SK-N-SH (cell line): ENCODE measurements at regions of chr2 and their contacts with region 1.

Region 1: GRCh38 chr2:238362626-238363025 is 42.3 kb downstream of the TRAF3IP1 start:
- DNase-seq: no peak
- H3K4me3 ChIP-seq: no peak overlapping the region
- H3K27ac ChIP-seq: no peak overlapping the region
- H3K4me1 ChIP-seq: peaks cover 0 to 4% of the 10 kb centered on the region in 2 experiments; a peak in 1 of 4 replicates
- H3K27me3 ChIP-seq: no peaks in the 10 kb centered on the region
- CTCF ChIP-seq: no peak
- EP300 ChIP-seq: no peak
- RAD21 ChIP-seq: no peak

Region 2: GRCh38 chr2:238331916-238332315 is 30.7 kb before region 1 on chr2:
- CTCF ChIA-PET with region 1: interaction called, 12 read pairs
- POLR2A ChIA-PET with region 1: no interaction called
- DNase-seq: peak; percentile 59
- H3K4me3 ChIP-seq: no peak overlapping the region
- H3K27ac ChIP-seq: no peak overlapping the region
- H3K4me1 ChIP-seq: peaks cover 0 to 10% of the 10 kb centered on the region in 2 experiments; a peak in 1 of 4 replicates
- H3K27me3 ChIP-seq: no peaks in the 10 kb centered on the region
- CTCF ChIP-seq: no peak
- EP300 ChIP-seq: no peak
- RAD21 ChIP-seq: no peak

Region 3: DNA sequence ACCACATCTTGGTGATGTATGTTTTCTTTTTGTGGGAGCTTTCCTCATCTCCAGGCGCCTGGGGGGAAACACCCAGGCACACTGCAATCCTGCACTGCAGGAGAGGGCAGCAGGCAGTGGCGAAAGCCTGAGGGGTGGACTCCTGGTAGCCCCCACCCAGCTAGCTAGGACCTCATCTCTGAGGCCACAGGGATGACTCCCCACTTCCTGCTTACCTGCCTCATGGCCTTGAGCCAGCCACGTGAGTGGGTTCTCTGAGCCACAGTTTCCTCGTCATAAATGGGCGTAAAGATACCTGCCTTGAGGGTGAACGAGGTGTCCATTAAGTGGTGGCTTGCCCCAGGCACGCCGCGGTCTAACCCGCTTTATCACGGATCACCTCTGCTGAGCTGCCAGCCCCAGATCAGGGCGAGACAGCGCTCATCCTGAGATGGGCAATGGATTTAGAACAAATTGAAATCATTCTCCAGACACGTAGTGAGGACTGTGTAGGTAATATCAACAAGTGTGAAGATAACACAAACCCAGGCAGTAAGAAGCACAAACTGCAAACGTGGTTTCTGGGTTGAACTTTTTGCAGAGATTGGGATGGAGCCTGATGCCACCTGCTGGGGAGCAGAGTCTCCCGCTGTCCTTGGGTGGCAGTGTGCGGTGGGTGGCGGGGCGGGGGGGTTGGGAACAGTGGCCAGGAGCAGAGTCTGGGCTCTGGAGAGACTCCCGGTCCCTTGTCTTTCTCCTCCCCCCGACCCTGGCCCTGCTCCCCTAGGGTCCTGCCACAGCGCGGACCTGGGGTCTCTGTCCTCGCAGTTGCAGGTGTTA is 23.0 kb before region 1 on chr2:
- CTCF ChIA-PET with region 1: interaction called, 10 read pairs
- POLR2A ChIA-PET with region 1: no interaction called
- DNase-seq: peak; percentile 48
- H3K4me3 ChIP-seq: no peak overlapping the region
- H3K27ac ChIP-seq: no peak overlapping the region
- H3K4me1 ChIP-seq: no peaks in the 10 kb centered on the region
- H3K27me3 ChIP-seq: no peaks in the 10 kb centered on the region
- CTCF ChIP-seq: no peak
- EP300 ChIP-seq: no peak
- RAD21 ChIP-seq: peak; percentile 13; the same call in 1 of the 2 replicates